ENCODE measurements at regions of chr6 and their contacts with region 1.

Region 1: DNA sequence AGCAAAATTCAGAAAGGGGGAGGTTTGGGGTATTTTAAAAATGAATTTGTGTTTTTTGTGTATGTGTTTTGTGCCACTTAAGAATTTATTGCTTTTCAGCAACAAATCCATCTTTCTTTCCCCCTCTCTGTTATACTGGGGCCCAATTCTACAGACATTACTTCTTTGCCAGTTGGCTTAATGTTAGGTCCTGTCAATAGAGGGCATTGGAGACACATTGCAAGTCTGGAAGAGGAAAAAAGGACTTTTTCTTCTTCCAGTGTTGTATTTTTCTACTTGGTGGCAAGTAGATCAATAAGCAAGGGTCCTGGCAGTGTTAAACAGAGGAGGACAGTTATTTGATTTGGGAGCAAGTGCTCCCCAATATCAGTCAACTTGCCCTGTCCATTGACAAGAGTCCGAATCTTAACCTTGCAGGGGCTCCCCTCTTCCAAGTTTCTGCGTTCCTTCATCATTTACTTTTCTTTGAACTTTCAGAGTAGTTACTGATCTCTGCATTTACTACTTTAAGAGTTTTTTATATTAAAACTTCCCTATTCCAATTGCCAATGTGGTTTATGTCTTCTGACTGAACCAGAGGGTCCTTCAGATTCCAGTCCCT is 23.4 kb downstream of the SCML4 start:
- DNase-seq: no peak
- H3K4me3 ChIP-seq: no peak overlapping the region
- H3K4me3 Mint-ChIP-seq: no peak overlapping the region
- H3K27ac Mint-ChIP-seq: no peak overlapping the region
- H3K4me1 ChIP-seq: no peaks in the 10 kb centered on the region
- H3K4me1 Mint-ChIP-seq: no peaks in the 10 kb centered on the region
- H3K27me3 ChIP-seq: no peaks in the 10 kb centered on the region
- H3K27me3 Mint-ChIP-seq: peaks cover 7% of the 10 kb centered on the region
- CTCF ChIP-seq: peak; percentile 36 to 58

Region 2: GRCh38 chr6:107847844-107848802 is 47.5 kb after region 1 on chr6:
- CTCF ChIA-PET with region 1: interaction called, 3 read pairs
- POLR2A ChIA-PET with region 1: no interaction called
- intact Hi-C with region 1: loop called (anchors 1 kb)
- DNase-seq: peak; percentile 85 to 94
- H3K4me3 ChIP-seq: peak overlapping the region; percentile 30
- H3K4me3 Mint-ChIP-seq: peak overlapping the region; percentile 76
- H3K27ac Mint-ChIP-seq: peak overlapping the region; percentile 54
- H3K4me1 ChIP-seq: peaks cover 5% of the 10 kb centered on the region; the same call in 1 of the 2 replicates
- H3K4me1 Mint-ChIP-seq: no peaks in the 10 kb centered on the region
- H3K27me3 ChIP-seq: no peaks in the 10 kb centered on the region
- H3K27me3 Mint-ChIP-seq: no peaks in the 10 kb centered on the region
- CTCF ChIP-seq: peak; percentile 88 to 93

Region 3: DNA sequence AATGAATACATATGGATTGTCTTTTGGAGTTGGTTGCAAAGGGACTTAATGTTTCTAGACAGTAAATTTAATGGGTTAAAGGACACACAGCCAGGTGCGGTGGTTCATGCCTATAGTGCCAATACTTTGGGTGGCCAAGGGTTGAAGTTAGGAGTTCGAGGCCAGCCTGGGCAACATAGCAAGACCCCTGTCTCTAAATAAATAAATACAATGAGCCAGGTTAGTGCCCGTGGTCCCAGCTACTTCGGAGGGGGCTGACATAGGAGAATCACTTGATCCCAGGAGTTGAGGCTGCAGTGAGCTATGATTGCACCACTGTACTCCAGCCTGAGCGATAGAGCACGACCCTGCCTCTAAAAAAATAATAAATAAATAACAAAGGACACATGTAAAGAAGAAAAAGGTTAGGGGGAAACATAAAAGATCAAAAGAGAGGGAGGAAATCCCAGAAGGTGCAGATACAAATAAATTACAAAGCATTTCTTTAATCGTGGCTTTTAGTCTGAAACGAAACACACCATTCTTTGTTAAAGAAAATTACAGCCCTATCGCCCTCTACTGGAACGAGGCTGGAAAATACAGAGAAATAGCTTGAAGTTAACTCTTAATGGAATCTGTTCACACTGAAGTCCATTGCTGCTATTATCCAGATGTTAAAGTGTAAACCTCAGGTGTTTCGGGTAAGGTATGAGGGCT is 66.1 kb after region 1 on chr6:
- CTCF ChIA-PET with region 1: no interaction called
- POLR2A ChIA-PET with region 1: no interaction called
- intact Hi-C with region 1: loop called (anchors 5 kb)
- DNase-seq: peak in 1 of 2 experiments; percentile 30
- H3K4me3 ChIP-seq: no peak overlapping the region
- H3K4me3 Mint-ChIP-seq: no peak overlapping the region
- H3K27ac Mint-ChIP-seq: no peak overlapping the region
- H3K4me1 ChIP-seq: no peaks in the 10 kb centered on the region
- H3K4me1 Mint-ChIP-seq: no peaks in the 10 kb centered on the region
- H3K27me3 ChIP-seq: no peaks in the 10 kb centered on the region
- H3K27me3 Mint-ChIP-seq: no peaks in the 10 kb centered on the region
- CTCF ChIP-seq: peak; percentile 32 to 56